ENCODE measurements at regions of chr2 and their contacts with region 1.

Region 1: DNA sequence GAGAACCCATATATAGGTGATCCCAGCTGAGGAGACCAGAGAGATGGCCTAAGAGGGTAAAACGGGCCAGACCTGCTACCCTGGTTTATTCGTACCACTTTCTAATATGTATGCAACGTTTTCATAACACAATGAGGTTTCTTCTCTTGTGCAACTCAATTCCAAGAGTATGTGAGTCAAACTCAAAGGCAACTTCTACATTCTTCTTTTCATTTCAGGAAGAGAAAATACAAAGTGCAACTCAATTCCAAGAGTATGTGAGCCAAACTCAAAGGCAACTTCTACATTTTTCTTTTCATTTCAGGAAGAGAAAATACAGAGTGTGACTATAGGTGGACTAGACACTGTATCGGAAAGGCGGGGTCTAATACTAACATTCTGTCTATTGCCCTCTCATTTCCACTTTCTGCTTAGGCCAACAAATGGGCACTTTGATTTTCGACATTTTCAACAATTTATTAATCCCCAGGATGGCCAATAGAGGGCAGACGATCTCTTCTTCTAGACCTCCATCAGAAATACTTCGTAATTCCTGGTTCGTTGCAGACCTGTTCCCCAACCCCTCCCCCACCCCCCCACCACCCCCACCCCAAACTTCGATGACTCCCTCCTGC is 3.7 kb upstream of the CRIM1 start:
- DNase-seq: peak; percentile 55 to 72 (median 67)
- H3K4me3 ChIP-seq: no peak overlapping the region
- H3K27ac ChIP-seq: no peak overlapping the region
- H3K4me1 ChIP-seq: peaks cover 9 to 21% (median 14%) of the 10 kb centered on the region in 4 experiments
- H3K27me3 ChIP-seq: peaks cover 0 to 5% (median 0%) of the 10 kb centered on the region in 5 experiments

Region 2: DNA sequence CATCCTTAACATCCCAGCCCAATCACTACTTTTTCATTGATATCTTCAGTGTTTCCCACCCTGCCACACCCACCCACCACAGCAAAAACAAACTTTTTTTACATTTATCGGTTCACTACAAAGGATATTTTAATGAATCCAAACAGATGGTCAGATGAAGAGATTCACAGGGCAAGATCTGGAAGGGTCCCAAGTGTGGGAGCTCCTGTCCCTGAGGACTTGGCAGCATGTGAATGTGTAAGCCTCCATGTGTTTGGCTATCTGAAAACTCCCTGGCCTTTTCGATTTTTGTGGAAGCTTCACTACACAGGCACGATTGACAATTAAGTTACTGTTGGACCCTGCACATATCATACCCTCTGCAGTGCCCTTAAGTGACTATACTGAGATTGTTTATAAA is 44.4 kb before region 1 on chr2:
- CTCF ChIA-PET with region 1: no interaction called
- POLR2A ChIA-PET with region 1: no interaction called
- DNase-seq: no peak
- H3K4me3 ChIP-seq: no peak overlapping the region
- H3K27ac ChIP-seq: no peak overlapping the region
- H3K4me1 ChIP-seq: no peaks in the 10 kb centered on the region
- H3K27me3 ChIP-seq: no peaks in the 10 kb centered on the region

Region 3: DNA sequence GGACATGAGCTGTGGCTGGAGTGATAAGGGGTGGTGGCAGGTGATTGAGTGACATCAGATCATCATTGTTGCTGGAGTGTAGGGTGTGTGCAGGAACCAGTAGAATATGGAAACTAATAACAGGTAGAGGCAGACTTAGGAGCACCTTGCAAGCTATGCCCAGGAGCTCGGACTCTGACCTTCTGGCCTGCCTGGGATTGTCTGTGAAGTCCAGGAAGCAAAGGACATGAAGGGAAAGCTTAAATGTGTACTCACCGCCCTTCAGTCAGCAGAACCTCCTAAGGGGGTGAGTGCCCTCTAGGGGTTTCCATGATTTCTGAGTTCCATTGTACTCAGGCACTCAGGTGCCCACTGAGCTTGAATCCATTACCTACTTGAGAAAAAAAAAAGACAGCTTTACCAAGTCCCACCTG is 107.9 kb after region 1 on chr2:
- CTCF ChIA-PET with region 1: interaction called, 10 read pairs
- POLR2A ChIA-PET with region 1: no interaction called
- DNase-seq: peak in 1 of 3 donors; percentile 19
- H3K4me3 ChIP-seq: no peak overlapping the region
- H3K27ac ChIP-seq: no peak overlapping the region
- H3K4me1 ChIP-seq: peaks cover 0 to 6% (median 4%) of the 10 kb centered on the region in 4 experiments
- H3K27me3 ChIP-seq: no peaks in the 10 kb centered on the region

Region 4: DNA sequence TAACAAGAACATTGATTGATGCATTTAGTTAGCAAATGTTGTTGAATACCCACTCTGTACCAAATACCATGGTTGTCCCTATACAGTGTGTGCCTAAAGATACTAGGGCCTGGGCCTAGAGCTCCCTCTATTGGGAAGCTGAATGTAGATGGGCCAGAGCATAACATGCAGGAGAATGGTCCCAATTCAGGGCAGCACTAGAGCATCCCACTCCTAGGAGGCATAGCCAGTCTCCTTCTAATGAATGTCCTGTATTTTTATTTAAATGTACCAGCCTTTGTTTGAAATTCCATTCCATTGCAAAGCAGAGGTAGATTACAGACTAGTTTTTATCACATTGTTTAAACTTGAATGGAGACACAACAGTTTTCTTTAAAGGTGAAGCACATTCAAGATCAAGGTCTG is 155.6 kb after region 1 on chr2:
- CTCF ChIA-PET with region 1: interaction called, 10 read pairs
- POLR2A ChIA-PET with region 1: no interaction called
- DNase-seq: peak; percentile 52 to 68 (median 58)
- H3K4me3 ChIP-seq: no peak overlapping the region
- H3K27ac ChIP-seq: no peak overlapping the region
- H3K4me1 ChIP-seq: no peaks in the 10 kb centered on the region
- H3K27me3 ChIP-seq: no peaks in the 10 kb centered on the region